T-cell (primary cell): ENCODE measurements at regions of chr19 and their contacts with region 1.

Region 1: DNA sequence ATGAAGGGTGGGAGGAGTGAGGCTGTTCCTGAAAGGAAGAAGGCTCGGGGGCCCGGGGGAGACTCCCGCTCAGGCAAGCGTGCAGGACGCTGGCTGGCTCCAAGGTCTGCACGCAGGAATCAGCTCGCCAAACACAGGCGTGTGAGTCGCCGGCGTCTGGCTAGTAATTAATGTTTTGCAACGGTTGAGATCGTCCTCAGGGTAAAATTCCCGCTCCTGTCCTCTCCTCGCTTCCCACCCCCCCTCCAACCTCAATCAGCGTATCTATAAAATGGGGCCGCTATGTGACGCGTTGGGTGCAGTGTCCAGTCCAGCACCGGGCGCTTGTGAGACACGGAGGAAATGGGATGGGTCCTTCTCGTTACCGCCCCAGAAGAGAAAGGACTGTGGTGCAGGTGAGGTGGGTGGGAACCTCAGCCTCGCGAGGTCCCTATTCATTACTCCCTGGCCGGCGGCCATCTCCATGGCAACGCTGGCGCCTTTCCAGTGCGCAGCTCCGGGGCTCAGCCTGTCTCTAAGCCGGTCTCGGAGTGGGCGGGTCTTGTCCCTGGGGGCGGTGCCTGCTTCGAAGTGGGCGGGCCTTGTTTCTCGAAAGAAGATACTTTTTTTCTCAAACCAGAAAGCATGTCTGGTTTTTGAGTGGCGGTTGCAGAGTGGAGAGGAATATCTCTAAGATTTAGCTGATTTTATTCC is 6.5 kb upstream of the ZNF579 start:
- DNase-seq: peak; percentile 79 to 96 (median 89)
- ATAC-seq: peak; percentile 90 to 97 (median 94)
- H3K4me3 ChIP-seq: peak overlapping the region; percentile 40 to 57
- H3K4me3 Mint-ChIP-seq: peak overlapping the region; percentile 77 to 83 (median 82)
- H3K27ac ChIP-seq: no peak overlapping the region
- H3K27ac Mint-ChIP-seq: peak overlapping the region; percentile 78 to 82
- H3K4me1 ChIP-seq: peaks cover 17 to 29% of the 10 kb centered on the region in 2 experiments
- H3K4me1 Mint-ChIP-seq: peaks cover 20 to 35% (median 25%) of the 10 kb centered on the region in 3 donors
- H3K27me3 ChIP-seq: peaks cover 0 to 17% of the 10 kb centered on the region in 2 experiments
- H3K27me3 Mint-ChIP-seq: peaks cover 0 to 2% of the 10 kb centered on the region in 2 donors

Region 2: DNA sequence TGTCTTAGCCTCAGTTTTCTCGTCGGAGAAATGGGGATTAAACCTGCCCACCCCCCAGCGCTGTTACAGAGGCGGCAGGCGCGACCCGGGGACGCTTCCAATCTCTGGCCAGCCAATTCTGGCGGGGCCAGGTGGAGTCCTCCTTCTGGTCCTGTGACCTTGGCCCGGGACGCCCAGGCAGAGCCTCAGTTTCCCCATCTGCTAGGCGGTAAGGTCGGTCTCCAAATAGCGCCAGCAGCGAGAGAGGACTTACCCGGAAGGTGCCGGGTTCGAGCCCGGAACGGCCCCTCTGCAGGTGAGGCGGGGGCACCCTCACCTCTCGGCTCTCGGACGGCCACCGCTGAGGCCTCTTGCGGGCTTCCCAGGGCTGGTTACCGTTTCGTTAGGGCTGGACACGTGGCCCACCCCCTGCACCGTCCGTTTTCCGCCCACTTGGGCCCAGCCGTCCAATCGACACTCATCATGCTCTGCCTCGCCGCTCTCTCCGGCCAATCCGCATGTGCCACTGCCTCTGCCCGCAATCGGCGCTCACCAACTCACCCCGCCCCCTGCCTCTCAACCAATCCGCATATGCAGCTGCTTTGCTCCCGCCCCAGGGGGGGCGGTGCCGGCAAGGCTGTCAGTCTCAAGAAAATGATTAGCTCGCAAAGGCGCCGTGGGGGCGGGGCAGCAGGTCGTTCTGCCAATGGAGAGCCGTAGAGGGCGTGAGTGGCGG is 125.7 kb before region 1 on chr19 and contains the start of gene ISOC2:
- CTCF ChIA-PET with region 1: no interaction called
- POLR2A ChIA-PET with region 1: no interaction called
- DNase-seq: peak; percentile 99 to 100 (median 100)
- ATAC-seq: peak; percentile 96 to 98 (median 97)
- H3K4me3 ChIP-seq: peak within 1 kb of the TSS; percentile 84 to 94
- H3K4me3 Mint-ChIP-seq: peak within 1 kb of the TSS; percentile 85 to 88 (median 87)
- H3K27ac ChIP-seq: peak within 1 kb of the TSS; percentile 70
- H3K27ac Mint-ChIP-seq: peak within 1 kb of the TSS; percentile 77 to 93
- H3K4me1 ChIP-seq: peaks cover 0 to 19% of the 10 kb centered on the region in 2 experiments
- H3K4me1 Mint-ChIP-seq: peaks cover 20 to 30% (median 25%) of the 10 kb centered on the region in 3 donors
- H3K27me3 ChIP-seq: peaks cover 0 to 4% of the 10 kb centered on the region in 2 experiments
- H3K27me3 Mint-ChIP-seq: no peaks in the 10 kb centered on the region
- total RNA-seq, gene ISOC2: 6.8 to 18.9 (median 14.7) TPM

Region 3: GRCh38 chr19:55526216-55527196 is 60.6 kb before region 1 on chr19:
- CTCF ChIA-PET with region 1: no interaction called
- POLR2A ChIA-PET with region 1: no interaction called
- DNase-seq: peak in 5 of 35 experiments; percentile 11 to 52 (median 42)
- ATAC-seq: peak in 1 of 4 experiments; percentile 84
- H3K4me3 ChIP-seq: no peak overlapping the region
- H3K4me3 Mint-ChIP-seq: no peak overlapping the region
- H3K27ac ChIP-seq: no peak overlapping the region
- H3K27ac Mint-ChIP-seq: no peak overlapping the region
- H3K4me1 ChIP-seq: no peaks in the 10 kb centered on the region
- H3K4me1 Mint-ChIP-seq: no peaks in the 10 kb centered on the region
- H3K27me3 ChIP-seq: peaks cover 0 to 20% of the 10 kb centered on the region in 2 experiments
- H3K27me3 Mint-ChIP-seq: peaks cover 5 to 7% of the 10 kb centered on the region in 2 donors

Region 4: GRCh38 chr19:55605207-55605636 is 18.1 kb after region 1 on chr19:
- CTCF ChIA-PET with region 1: interaction called in 1 of 2 experiments, 4 read pairs
- POLR2A ChIA-PET with region 1: interaction called, 5 to 17 read pairs
- DNase-seq: peak; percentile 90 to 99 (median 96)
- ATAC-seq: peak; percentile 72 to 80 (median 77)
- H3K4me3 ChIP-seq: peak overlapping the region; percentile 51 to 84
- H3K4me3 Mint-ChIP-seq: peak overlapping the region; percentile 78 to 86 (median 83)
- H3K27ac ChIP-seq: peak overlapping the region; percentile 74
- H3K27ac Mint-ChIP-seq: peak overlapping the region; percentile 88 to 91
- H3K4me1 ChIP-seq: peaks cover 17 to 53% of the 10 kb centered on the region in 2 experiments
- H3K4me1 Mint-ChIP-seq: peaks cover 58 to 73% (median 61%) of the 10 kb centered on the region in 3 donors
- H3K27me3 ChIP-seq: no peaks in the 10 kb centered on the region
- H3K27me3 Mint-ChIP-seq: no peaks in the 10 kb centered on the region